ENCODE measurements at regions of chr7 and their contacts with region 1.

Region 1: DNA sequence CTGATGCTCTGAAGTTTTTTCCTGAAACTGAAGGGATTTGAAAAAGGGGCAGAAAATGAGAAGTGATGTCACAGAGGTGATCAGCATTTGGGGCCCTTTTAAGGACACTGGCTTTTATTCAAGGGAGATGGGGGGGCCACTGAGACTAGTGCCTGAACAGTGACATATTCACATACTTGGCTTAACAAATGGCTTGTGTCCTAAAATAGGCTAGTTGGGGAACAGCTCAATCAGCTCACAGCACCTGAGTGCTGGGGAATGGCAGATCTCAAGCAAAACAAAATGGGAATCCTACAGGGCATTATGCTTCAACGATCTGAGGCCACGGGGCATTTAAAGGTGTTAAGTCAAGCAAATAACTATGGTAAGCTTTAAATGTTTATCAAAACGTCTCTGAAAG is 90.1 kb downstream of the UBE2H start:
- DNase-seq: no peak
- ATAC-seq: peak; percentile 64
- H3K4me3 Mint-ChIP-seq: no peak overlapping the region
- H3K27ac Mint-ChIP-seq: peak overlapping the region; percentile 83
- H3K4me1 Mint-ChIP-seq: peaks cover 64% of the 10 kb centered on the region
- H3K27me3 Mint-ChIP-seq: no peaks in the 10 kb centered on the region
- CTCF ChIP-seq: no peak

Region 2: DNA sequence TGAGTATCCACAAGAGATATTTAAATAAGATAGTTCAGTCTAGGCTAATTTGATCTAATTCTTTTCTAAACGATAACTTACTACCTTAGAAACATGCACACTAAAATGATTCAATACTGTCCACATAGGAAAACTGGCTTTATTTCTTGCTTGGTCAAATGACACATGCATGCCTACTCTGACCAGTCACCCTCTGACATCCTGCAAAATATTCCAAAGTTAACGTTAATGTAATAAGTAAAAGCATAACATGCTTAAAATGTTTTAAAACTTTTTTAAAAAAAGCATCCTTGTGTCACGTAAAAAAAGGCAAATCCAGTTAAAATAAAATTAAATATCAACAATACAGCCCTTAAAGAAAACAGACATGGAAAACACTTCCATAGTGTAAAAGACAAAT is 19.8 kb after region 1 on chr7:
- CTCF ChIA-PET with region 1: no interaction called
- POLR2A ChIA-PET with region 1: no interaction called
- DNase-seq: no peak
- ATAC-seq: no peak
- H3K4me3 Mint-ChIP-seq: no peak overlapping the region
- H3K27ac Mint-ChIP-seq: no peak overlapping the region; the same call in 1 of the 2 replicates
- H3K4me1 Mint-ChIP-seq: peaks cover 53% of the 10 kb centered on the region
- H3K27me3 Mint-ChIP-seq: no peaks in the 10 kb centered on the region
- CTCF ChIP-seq: no peak

Region 3: GRCh38 chr7:129940329-129940728 is 77.6 kb after region 1 on chr7:
- CTCF ChIA-PET with region 1: interaction called, 10 read pairs
- POLR2A ChIA-PET with region 1: no interaction called
- DNase-seq: no peak
- ATAC-seq: no peak
- H3K4me3 Mint-ChIP-seq: no peak overlapping the region
- H3K27ac Mint-ChIP-seq: 0 out of 2 replicates have a peak overlapping the region, but pooled peaks have one; percentile 45
- H3K4me1 Mint-ChIP-seq: peaks cover 11% of the 10 kb centered on the region
- H3K27me3 Mint-ChIP-seq: no peaks in the 10 kb centered on the region
- CTCF ChIP-seq: no peak